ENCODE measurements at regions of chr7 and their contacts with region 1.

Region 1: GRCh38 chr7:26688936-26689506 is 175.4 kb downstream of the SKAP2 start:
- DNase-seq: no peak
- H3K4me3 ChIP-seq: no peak overlapping the region
- H3K27ac ChIP-seq: peak overlapping the region in 6 of 8 donors; percentile 23 to 48 (median 41)
- H3K4me1 ChIP-seq: peaks cover 12 to 76% (median 37%) of the 10 kb centered on the region in 6 donors
- H3K27me3 ChIP-seq: no peaks in the 10 kb centered on the region
- CTCF ChIP-seq: no peak
- POLR2A ChIP-seq: no peak

Region 2: DNA sequence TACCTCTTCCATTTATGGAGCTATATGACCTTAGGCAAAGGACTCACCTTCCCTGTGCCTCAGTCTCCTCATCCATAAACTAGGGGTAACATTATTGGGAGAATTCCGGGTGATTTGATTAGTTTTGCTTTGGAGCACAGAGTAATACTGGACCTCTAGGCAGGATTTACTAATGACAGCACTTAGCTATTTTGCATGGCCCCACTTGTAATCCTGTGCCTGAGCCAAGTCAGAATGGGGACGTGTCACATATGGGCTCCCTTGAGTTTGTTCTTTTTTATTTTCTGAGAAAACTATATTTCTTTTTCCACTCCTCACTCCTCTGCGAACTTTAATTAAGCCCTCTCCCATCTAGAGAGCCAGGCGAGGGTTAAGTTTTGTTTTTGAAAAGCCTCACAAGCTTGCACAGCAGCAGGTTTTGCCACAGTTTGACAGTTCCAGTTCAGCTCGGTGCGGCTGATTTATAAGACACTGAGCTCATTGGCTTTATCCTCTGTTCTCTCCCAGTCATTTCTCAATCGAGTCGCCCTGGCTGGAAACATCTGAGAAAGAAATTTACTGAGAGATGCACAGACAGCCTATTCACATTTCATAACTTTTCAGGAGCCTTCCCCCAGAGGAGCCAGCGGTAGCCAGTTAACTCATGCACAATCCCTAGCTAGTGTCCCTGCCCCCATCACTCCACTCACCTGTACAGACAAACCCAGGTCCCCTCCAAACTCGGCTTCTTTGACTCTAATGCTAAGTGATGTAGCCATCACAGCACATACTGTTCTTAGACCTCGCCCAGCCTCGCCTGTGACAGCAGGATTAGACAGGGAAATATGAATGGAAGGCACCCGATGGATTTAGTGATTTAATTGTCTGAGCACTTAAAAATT is 1018.8 kb before region 1 on chr7:
- intact Hi-C with region 1: no loop called
- DNase-seq: no peak
- H3K4me3 ChIP-seq: no peak overlapping the region
- H3K27ac ChIP-seq: peak overlapping the region in 6 of 8 donors; percentile 29 to 67 (median 52)
- H3K4me1 ChIP-seq: no peaks in the 10 kb centered on the region
- H3K27me3 ChIP-seq: no peaks in the 10 kb centered on the region
- CTCF ChIP-seq: no peak
- POLR2A ChIP-seq: no peak

Region 3: DNA sequence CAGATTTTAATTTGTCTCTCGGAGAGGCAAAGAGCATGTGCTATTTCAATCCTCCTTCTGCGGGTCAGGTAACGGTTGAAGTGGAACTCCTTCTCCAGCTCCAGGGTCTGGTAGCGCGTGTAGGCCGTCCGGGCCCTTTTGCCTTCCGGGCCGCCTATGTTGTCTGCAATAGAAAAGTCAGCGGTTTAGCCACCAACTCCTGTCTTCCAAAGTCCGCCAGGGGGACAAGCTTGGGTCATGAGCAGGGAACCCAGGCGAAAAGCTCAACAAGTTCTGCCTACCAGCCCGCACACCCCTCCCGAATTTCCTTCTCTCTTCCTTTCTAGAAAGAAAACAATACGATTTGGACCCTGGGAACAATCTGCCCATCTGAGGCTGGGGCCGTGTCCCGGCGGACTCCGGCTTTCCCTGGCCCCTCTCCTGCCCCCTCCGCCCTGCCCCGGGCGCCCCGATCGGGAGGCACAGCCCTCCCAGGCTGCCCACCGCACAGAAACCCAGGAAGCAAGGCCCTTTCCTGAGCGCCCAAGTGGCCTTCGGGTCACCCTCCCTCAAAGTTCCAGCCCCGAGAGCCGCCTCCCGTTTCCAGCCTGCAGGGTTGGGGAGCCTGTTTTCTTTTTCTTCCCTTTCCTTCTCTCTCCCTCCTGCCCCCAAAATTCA is 453.0 kb after region 1 on chr7:
- intact Hi-C with region 1: loop called (anchors 2 kb)
- DNase-seq: peak; percentile 68
- H3K4me3 ChIP-seq: peak overlapping the region; percentile 44 to 77 (median 49)
- H3K27ac ChIP-seq: peak overlapping the region; percentile 66 to 95 (median 82)
- H3K4me1 ChIP-seq: peaks cover 0 to 25% (median 2%) of the 10 kb centered on the region in 6 donors
- H3K27me3 ChIP-seq: peaks cover 0 to 73% (median 19%) of the 10 kb centered on the region in 7 donors
- CTCF ChIP-seq: peak in 4 of 11 experiments; percentile 9 to 33 (median 24)
- POLR2A ChIP-seq: no peak

Region 4: GRCh38 chr7:27212497-27213432 is 523.7 kb after region 1 on chr7:
- intact Hi-C with region 1: no loop called
- DNase-seq: peak; percentile 69
- H3K4me3 ChIP-seq: peak overlapping the region in 2 of 8 donors; percentile 7 to 21
- H3K27ac ChIP-seq: no peak overlapping the region
- H3K4me1 ChIP-seq: peaks cover 5 to 28% (median 20%) of the 10 kb centered on the region in 6 donors
- H3K27me3 ChIP-seq: peaks cover 9 to 100% (median 74%) of the 10 kb centered on the region in 7 donors
- CTCF ChIP-seq: peak in 1 of 11 experiments; percentile 8
- POLR2A ChIP-seq: no peak

Region 5: DNA sequence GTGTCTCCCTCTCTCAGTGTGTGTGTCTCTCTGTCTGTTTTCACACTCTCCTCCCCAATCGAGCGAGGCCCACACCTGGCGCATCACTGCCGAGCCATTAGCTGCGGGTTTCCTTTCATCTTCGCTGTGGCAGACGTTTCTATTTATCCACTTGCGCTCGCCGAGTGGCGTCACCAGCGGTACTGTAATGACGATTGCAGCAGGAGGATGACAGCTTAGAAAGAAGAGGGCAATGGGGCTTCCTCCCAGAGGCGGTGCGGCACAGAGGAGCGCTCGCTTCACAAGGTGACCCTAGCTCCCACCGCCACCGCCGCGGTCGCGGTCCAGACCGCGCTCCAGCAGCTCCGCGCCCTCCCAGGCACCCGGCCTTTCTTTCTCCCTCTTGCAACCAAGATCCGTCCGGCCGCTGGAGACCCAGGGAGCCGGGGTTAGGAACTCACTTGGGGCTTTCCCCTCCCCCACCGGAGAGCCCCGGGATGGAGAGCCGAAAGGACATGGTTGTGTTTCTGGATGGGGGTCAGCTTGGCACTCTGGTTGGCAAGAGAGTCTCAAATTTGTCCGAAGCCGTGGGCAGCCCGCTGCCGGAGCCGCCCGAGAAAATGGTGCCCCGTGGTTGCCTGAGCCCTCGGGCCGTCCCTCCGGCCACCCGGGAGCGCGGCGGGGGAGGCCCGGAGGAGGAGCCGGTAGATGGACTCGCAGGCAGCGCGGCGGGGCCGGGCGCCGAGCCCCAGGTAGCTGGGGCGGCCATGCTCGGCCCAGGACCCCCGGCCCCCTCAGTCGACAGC is 553.7 kb after region 1 on chr7 and contains the start of gene EVX1:
- intact Hi-C with region 1: no loop called
- DNase-seq: no peak
- H3K4me3 ChIP-seq: peak within 1 kb of the TSS in 2 of 8 donors; percentile 8 to 48
- H3K27ac ChIP-seq: no peak within 1 kb of the TSS
- H3K4me1 ChIP-seq: peaks cover 5 to 65% (median 43%) of the 10 kb centered on the region in 6 donors
- H3K27me3 ChIP-seq: peaks cover 11 to 100% (median 100%) of the 10 kb centered on the region in 7 donors
- CTCF ChIP-seq: no peak
- POLR2A ChIP-seq: no peak
- total RNA-seq, gene EVX1: not detected

Measured in spleen (tissue), 13 donors.